ENCODE measurements at regions of chr2 and their contacts with region 1.

Region 1: GRCh38 chr2:188788621-188789020 is 185.6 kb upstream of the COL3A1 start:
- DNase-seq: peak; percentile 85

Region 2: GRCh38 chr2:188978291-188979081 is 189.9 kb after region 1 on chr2:
- intact Hi-C with region 1: loop called in 1 of 2 experiments (anchors 5 kb)
- DNase-seq: no peak